Tibial artery (tissue), 4 donors: ENCODE measurements at regions of chr20 and their contacts with region 1.

Region 1: GRCh38 chr20:50379049-50379990 is 130.9 kb upstream of the PTPN1 start:
- DNase-seq: peak; percentile 96 to 97
- H3K4me3 ChIP-seq: peak overlapping the region; percentile 6 to 22
- H3K27ac ChIP-seq: peak overlapping the region; percentile 62 to 64
- H3K4me1 ChIP-seq: peaks cover 0 to 39% (median 27%) of the 10 kb centered on the region in 4 donors
- H3K27me3 ChIP-seq: no peaks in the 10 kb centered on the region
- CTCF ChIP-seq: no peak

Region 2: DNA sequence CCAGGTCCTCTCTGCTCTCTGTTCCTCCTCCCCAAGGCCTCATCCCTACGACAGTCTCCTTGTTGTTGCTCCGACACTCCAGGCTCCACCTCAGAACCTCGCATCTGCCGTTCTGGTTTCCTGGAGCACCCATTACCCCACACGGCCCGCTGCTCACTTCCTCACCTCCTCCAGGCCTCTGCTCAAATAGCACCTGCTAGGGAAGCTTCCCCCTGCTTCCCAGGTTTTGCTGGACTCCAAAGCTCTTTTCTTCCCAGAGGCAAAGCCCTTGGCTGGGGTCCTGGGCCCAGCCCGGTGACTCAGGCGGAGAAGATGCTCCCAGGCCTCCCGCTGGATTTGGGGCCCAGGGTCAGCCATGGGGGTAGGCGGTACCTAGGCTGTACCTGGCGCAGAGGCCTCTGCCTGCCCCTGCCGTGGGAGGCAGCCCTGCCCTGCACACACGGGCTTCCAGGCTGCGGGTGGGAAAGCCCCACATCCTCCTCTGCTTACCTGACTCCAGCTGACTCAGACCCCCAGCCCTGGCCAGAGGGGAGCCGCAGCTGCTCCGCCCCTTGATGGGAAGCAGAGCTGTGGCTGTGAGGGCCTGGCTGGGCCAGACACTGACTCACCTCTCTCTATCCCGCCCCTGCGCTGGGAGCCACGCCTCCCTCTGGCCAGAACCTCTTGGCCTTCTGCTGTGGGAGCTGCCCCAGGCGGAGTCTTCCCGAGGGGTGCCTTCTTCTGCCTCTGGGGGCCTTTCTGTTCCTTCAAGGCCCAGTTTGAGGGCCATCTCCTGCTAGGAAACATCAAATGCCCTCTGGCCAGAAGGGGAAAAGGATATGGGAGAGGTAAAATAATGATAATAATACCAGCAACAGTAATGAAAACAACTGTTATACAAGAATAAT is 58.2 kb before region 1 on chr20:
- intact Hi-C with region 1: loop called (anchors 10 kb)
- DNase-seq: peak; percentile 94 to 98
- H3K4me3 ChIP-seq: peak overlapping the region; percentile 42 to 53
- H3K27ac ChIP-seq: peak overlapping the region; percentile 82 to 86
- H3K4me1 ChIP-seq: peaks cover 0 to 30% (median 27%) of the 10 kb centered on the region in 4 donors
- H3K27me3 ChIP-seq: no peaks in the 10 kb centered on the region
- CTCF ChIP-seq: no peak

Region 3: GRCh38 chr20:50516180-50516934 is 137.0 kb after region 1 on chr20:
- intact Hi-C with region 1: no loop called
- DNase-seq: no peak
- H3K4me3 ChIP-seq: no peak overlapping the region
- H3K27ac ChIP-seq: no peak overlapping the region
- H3K4me1 ChIP-seq: peaks cover 0 to 100% (median 42%) of the 10 kb centered on the region in 4 donors
- H3K27me3 ChIP-seq: no peaks in the 10 kb centered on the region
- CTCF ChIP-seq: no peak